ENCODE measurements at regions of chr2 and their contacts with region 1.

Region 1: DNA sequence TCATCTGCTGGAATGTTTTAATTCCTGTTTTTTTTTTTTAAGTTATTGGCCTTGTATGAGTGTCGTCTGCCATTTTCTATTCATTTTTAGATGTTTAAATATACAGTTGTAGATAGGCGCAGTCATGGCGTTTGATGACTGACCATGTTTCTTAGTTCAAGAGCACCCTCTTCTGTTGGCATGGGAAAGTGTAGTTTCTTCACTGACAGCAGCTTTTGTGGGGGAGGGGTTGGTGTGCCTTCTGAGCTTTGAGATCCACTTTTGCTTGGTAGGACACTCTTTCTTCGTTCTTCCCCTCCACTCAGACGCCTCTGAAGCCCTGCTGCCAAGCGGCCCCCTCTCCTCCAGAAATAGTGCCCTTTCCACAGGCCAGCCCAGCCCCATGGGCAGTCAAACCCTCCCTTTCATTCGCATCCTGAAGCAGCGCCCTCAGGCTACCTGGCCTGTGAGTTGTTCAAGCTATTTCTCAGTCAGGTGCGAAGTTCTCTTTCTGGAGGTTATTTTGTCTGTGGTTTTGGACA is 492.0 kb downstream of the TNS1 start:
- DNase-seq: peak; percentile 89
- H3K4me3 ChIP-seq: no peak overlapping the region
- H3K27ac ChIP-seq: no peak overlapping the region
- H3K4me1 ChIP-seq: peaks cover 9% of the 10 kb centered on the region
- H3K27me3 ChIP-seq: no peaks in the 10 kb centered on the region
- CTCF ChIP-seq: peak; percentile 84

Region 2: DNA sequence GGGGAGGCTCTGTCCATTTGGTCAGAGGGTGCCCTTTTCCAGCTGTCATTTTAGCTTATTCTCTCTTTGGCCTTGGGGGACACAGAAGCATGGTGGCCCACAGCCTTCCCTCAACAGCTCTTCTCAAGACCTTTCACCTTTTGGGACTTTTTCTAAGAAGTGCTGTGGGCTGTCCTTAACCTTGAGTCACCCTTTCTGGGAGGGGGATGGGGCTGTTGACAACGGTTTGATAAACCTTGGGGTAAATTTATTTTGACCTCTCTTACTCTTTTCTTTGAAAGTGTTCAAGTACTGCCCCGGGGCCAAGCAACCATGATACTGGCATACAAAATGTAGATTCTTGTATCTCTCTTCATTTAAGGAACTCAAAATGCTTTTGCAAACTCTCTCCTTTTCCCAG is 829.1 kb before region 1 on chr2:
- CTCF ChIA-PET with region 1: interaction called, 10 read pairs
- POLR2A ChIA-PET with region 1: no interaction called
- intact Hi-C with region 1: loop called (anchors 1 kb)
- DNase-seq: no peak
- H3K4me3 ChIP-seq: no peak overlapping the region
- H3K27ac ChIP-seq: no peak overlapping the region
- H3K4me1 ChIP-seq: peaks cover 6% of the 10 kb centered on the region
- H3K27me3 ChIP-seq: no peaks in the 10 kb centered on the region
- CTCF ChIP-seq: no peak

Region 3: DNA sequence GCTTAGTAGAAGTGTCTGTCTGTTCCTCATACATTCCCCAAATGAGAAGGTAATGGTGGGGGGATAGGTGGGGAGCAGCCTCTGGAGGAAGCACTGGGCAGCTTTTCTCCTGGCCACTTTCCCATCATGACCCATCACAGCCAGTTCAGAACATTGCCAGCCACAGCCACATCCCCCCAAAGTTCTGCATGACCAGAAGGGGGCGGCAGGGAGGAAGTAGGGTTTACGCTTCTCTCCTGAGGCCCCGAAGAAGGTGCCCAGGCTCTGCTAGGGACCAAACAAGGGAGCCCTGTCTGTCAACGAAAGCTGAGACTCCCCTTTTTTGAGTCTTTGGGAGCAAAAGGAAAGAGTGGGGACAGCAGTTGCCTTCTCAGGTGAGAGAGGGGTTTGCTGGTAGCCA is 823.2 kb before region 1 on chr2:
- CTCF ChIA-PET with region 1: interaction called, 10 read pairs
- POLR2A ChIA-PET with region 1: no interaction called
- intact Hi-C with region 1: loop called (anchors 1 kb)
- DNase-seq: no peak
- H3K4me3 ChIP-seq: no peak overlapping the region
- H3K27ac ChIP-seq: no peak overlapping the region
- H3K4me1 ChIP-seq: peaks cover 12% of the 10 kb centered on the region
- H3K27me3 ChIP-seq: no peaks in the 10 kb centered on the region
- CTCF ChIP-seq: peak; percentile 65

Region 4: DNA sequence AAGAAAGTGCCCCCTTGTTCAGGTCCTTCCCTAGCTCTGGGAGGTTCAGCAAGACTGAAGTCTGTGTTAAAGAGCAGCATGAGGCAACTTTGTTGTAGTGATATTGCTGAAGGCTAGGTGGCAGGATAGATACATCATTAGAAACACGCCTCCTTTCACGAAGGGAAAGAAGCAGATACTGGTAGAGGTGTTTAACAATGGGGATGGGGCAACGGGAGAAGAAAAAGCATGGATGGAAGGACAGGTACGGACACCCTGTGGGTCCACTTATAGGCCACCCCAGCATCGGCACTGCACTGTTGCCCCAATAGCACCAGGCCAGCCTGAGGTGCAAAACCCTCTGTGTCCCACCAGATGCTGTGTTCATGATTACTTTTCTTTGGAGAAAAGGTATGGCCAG is 811.9 kb before region 1 on chr2:
- CTCF ChIA-PET with region 1: interaction called, 7 read pairs
- POLR2A ChIA-PET with region 1: no interaction called
- intact Hi-C with region 1: loop called (anchors 2 kb)
- DNase-seq: peak; percentile 76
- H3K4me3 ChIP-seq: no peak overlapping the region
- H3K27ac ChIP-seq: no peak overlapping the region
- H3K4me1 ChIP-seq: peaks cover 44% of the 10 kb centered on the region
- H3K27me3 ChIP-seq: no peaks in the 10 kb centered on the region
- CTCF ChIP-seq: peak; percentile 81

Region 5: DNA sequence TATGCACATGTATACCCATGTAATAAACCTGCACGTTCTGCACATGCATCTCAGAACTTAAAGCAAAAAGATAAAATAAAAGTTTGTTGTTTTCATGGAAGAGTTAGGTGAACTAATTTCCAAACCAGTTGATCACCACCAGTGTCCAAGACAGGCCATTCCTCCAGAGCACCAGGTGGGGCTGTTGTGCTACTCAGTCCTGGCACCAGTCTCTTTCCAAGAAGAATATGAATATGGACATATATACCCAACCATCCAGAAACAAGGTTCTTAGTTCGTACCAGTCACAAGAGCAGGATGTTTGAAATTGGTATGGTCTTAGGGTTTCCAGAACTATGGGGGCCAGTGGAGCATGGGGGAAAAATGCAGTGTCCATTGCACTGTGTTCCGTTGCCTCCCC is 633.7 kb before region 1 on chr2:
- CTCF ChIA-PET with region 1: no interaction called
- POLR2A ChIA-PET with region 1: no interaction called
- intact Hi-C with region 1: loop called (anchors 10 kb)
- DNase-seq: peak; percentile 6
- H3K4me3 ChIP-seq: no peak overlapping the region
- H3K27ac ChIP-seq: no peak overlapping the region
- H3K4me1 ChIP-seq: no peaks in the 10 kb centered on the region
- H3K27me3 ChIP-seq: no peaks in the 10 kb centered on the region
- CTCF ChIP-seq: peak; percentile 46

Region 6: DNA sequence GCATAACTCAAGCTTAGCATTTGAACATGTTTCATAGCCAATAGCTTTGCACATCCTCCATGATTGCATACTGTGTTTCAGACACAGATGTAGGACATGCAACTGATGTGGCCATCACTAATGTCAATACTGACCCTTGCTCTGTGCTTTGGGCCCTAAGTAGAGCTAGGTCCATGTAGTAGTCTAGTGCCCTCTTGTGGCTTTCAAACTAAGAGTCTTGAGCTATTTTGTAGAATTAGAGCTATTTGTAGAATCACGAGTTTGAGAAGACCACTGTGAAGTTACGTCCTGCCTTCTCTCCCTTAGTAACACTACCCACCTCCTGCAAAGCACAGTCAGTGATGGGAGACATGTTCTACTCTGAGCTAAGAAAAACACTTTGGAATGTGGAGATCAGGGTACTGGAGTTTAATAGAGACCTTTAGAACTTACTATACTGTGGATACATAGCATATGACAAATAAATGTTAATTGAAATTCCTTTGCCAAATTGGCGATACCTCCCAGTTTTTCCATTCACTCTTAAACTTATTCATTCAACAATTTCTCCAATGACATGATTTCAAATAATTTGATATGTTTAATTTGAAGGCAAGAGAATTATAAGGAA is 344.5 kb before region 1 on chr2:
- CTCF ChIA-PET with region 1: no interaction called
- POLR2A ChIA-PET with region 1: no interaction called
- intact Hi-C with region 1: loop called (anchors 10 kb)
- DNase-seq: peak; percentile 53
- H3K4me3 ChIP-seq: no peak overlapping the region
- H3K27ac ChIP-seq: no peak overlapping the region
- H3K4me1 ChIP-seq: no peaks in the 10 kb centered on the region
- H3K27me3 ChIP-seq: no peaks in the 10 kb centered on the region
- CTCF ChIP-seq: peak; percentile 61

Region 7: GRCh38 chr2:217325821-217326539 is 184.9 kb before region 1 on chr2:
- CTCF ChIA-PET with region 1: no interaction called
- POLR2A ChIA-PET with region 1: no interaction called
- intact Hi-C with region 1: loop called (anchors 5 kb)
- DNase-seq: peak; percentile 36
- H3K4me3 ChIP-seq: no peak overlapping the region
- H3K27ac ChIP-seq: peak overlapping the region; percentile 91
- H3K4me1 ChIP-seq: peaks cover 61% of the 10 kb centered on the region
- H3K27me3 ChIP-seq: no peaks in the 10 kb centered on the region
- CTCF ChIP-seq: peak; percentile 17; the same call in 1 of the 2 replicates

Region 8: GRCh38 chr2:217434181-217434975 is 76.5 kb before region 1 on chr2:
- CTCF ChIA-PET with region 1: no interaction called
- POLR2A ChIA-PET with region 1: no interaction called
- intact Hi-C with region 1: no loop called
- DNase-seq: peak; percentile 83
- H3K4me3 ChIP-seq: no peak overlapping the region
- H3K27ac ChIP-seq: no peak overlapping the region
- H3K4me1 ChIP-seq: peaks cover 20% of the 10 kb centered on the region
- H3K27me3 ChIP-seq: no peaks in the 10 kb centered on the region
- CTCF ChIP-seq: no peak

Measured in A673 (cell line).